K562 (cell line): ENCODE measurements at regions of chr14 and their contacts with region 1.

Region 1: GRCh38 chr14:103910262-103910935 is 17.9 kb upstream of the TDRD9 start:
- DNase-seq: peak; percentile 31 to 58 (median 47)
- ATAC-seq: peak; percentile 93
- H3K4me3 ChIP-seq: no peak overlapping the region
- H3K27ac ChIP-seq: no peak overlapping the region
- H3K4me1 ChIP-seq: peaks cover 0 to 5% of the 10 kb centered on the region in 2 experiments; a peak in 2 of 5 replicates
- H3K27me3 ChIP-seq: no peaks in the 10 kb centered on the region
- CTCF ChIP-seq: peak; percentile 62 to 73 (median 64)
- EP300 ChIP-seq: no peak
- POLR2A ChIP-seq: no peak
- RAD21 ChIP-seq: peak in 1 of 2 experiments; percentile 46; a peak in 2 of 4 replicates

Region 2: DNA sequence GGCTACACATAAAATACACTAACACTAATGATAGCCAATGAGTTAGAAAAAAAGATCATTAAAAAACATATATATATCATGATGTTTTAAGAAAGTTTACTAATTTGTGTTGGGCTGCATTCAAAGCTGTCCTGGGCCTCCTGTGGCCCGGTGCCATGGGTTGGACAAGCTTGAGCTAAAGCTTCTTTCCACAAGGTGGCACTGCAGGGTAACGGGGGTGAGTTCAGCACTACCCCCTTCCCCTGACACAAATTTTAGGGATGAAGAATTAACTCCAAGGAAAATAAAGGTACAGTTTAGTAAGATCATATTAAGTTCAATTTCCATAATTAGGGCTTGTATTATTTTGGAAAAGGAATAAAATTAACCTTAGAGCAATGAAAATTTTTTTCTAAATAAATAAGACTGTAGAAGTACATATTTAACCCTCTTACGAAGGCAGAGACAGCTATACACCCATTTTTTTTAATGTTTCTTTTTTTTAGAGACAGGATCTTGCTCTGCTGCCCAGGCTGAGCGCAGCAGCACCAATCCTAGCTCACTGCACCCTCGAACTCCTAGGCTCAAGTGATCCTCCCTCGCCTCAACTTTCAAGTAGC is 101.9 kb before region 1 on chr14:
- CTCF ChIA-PET with region 1: interaction called, 10 read pairs
- POLR2A ChIA-PET with region 1: no interaction called
- in situ Hi-C with region 1: loop called (anchors 5 kb)
- intact Hi-C with region 1: loop called (anchors 5 kb)
- DNase-seq: peak; percentile 53 to 77 (median 55)
- ATAC-seq: peak; percentile 97
- H3K4me3 ChIP-seq: no peak overlapping the region
- H3K27ac ChIP-seq: no peak overlapping the region
- H3K4me1 ChIP-seq: no peaks in the 10 kb centered on the region
- H3K27me3 ChIP-seq: peaks cover 0 to 3% of the 10 kb centered on the region in 2 experiments; a peak in 1 of 5 replicates
- CTCF ChIP-seq: peak; percentile 69 to 80 (median 72)
- EP300 ChIP-seq: no peak
- POLR2A ChIP-seq: no peak
- RAD21 ChIP-seq: peak; percentile 75 to 87